Activated CD4-positive, alpha-beta memory T cell treated with anti-CD3 and anti-CD28 coated beads for 36 hours (primary cell): ENCODE measurements at regions of chr6 and their contacts with region 1.

Region 1: GRCh38 chr6:26103770-26104456 is 16.7 kb downstream of the HFE start:
- DNase-seq: peak; percentile 93
- H3K4me3 Mint-ChIP-seq: peak overlapping the region; percentile 80
- H3K27ac Mint-ChIP-seq: peak overlapping the region; percentile 93
- H3K4me1 Mint-ChIP-seq: peaks cover 18% of the 10 kb centered on the region
- H3K27me3 Mint-ChIP-seq: peaks cover 3% of the 10 kb centered on the region

Region 2: DNA sequence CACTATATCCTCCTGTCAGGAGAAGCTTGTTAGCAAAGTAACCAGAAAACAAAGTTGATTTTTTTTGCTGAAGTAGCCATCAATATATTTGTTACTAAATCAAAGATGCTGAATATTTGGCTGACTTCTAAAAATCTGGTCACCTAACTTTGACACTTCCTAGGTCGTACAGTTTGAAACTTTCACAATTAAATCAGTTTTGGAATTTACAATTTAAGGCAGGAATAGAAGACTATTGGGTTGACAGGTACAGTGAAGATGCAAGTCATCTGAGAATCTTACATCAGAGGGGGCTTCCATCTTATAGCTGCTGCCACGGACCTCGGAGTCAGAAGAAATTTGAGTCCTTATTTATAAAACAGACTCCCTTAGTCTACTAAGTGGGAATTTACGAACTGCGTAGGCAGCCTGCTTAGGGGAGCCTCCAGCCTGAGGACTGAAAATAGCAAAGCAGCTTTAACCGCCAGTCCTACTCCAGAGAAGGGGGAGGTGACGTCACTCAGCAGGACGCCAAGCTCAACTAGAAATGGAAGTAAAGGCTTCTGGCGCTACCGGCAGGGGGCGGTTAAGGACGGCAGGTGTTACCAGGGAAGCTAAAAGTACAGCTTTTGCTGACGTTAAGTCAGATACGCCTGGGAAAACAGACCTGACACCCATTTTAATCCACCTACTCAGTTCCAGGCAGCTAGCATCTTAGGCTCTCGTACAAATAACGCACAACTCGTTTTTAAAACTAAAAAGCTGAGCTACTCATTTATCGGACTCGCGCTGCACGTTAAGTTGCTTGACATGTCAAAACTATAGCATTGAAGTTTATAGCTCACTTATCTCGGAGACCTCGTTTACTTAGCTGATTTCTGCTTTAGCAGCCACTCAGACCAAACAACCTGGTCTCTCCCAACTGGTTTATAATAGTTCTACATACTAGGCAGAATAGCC is 77.8 kb before region 1 on chr6:
- CTCF ChIA-PET with region 1: interaction called, 3 read pairs
- POLR2A ChIA-PET with region 1: interaction called, 7 read pairs
- intact Hi-C with region 1: loop called (anchors 2 kb)
- DNase-seq: peak; percentile 96
- H3K4me3 Mint-ChIP-seq: peak overlapping the region; percentile 87
- H3K27ac Mint-ChIP-seq: peak overlapping the region; percentile 91
- H3K4me1 Mint-ChIP-seq: peaks cover 53% of the 10 kb centered on the region
- H3K27me3 Mint-ChIP-seq: peaks cover 5% of the 10 kb centered on the region

Region 3: DNA sequence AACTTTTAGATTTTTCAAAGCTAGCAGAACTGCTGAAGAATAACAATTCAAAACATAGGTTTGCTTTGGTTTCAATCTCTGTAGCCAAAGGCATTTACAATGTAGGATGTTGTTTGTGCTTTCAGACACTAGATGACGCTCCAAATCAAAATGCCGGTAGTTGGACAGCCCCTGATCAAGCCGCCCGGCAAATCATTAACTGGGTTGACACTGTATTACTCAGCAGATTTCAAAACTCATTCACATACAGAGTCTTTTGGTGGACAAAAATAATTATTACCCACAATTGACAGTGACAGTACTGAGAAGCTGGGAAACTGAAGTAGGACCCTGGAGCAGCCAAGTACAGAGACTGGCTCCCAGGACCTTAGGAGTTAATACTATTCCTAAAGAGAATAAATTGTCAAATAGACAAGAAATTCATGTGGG is 37.9 kb before region 1 on chr6:
- CTCF ChIA-PET with region 1: interaction called, 478 read pairs
- POLR2A ChIA-PET with region 1: interaction called, 5 read pairs
- intact Hi-C with region 1: no loop called
- DNase-seq: peak; percentile 65
- H3K4me3 Mint-ChIP-seq: no peak overlapping the region
- H3K27ac Mint-ChIP-seq: no peak overlapping the region
- H3K4me1 Mint-ChIP-seq: peaks cover 4% of the 10 kb centered on the region
- H3K27me3 Mint-ChIP-seq: no peaks in the 10 kb centered on the region

Region 4: GRCh38 chr6:26312501-26313390 is 208.8 kb after region 1 on chr6:
- CTCF ChIA-PET with region 1: no interaction called
- POLR2A ChIA-PET with region 1: no interaction called
- intact Hi-C with region 1: no loop called
- DNase-seq: peak; percentile 89
- H3K4me3 Mint-ChIP-seq: peak overlapping the region; percentile 85
- H3K27ac Mint-ChIP-seq: peak overlapping the region; percentile 82
- H3K4me1 Mint-ChIP-seq: peaks cover 42% of the 10 kb centered on the region
- H3K27me3 Mint-ChIP-seq: peaks cover 7% of the 10 kb centered on the region